Gastrocnemius medialis (tissue), 4 donors: ENCODE measurements at regions of chr3 and their contacts with region 1.

Region 1: DNA sequence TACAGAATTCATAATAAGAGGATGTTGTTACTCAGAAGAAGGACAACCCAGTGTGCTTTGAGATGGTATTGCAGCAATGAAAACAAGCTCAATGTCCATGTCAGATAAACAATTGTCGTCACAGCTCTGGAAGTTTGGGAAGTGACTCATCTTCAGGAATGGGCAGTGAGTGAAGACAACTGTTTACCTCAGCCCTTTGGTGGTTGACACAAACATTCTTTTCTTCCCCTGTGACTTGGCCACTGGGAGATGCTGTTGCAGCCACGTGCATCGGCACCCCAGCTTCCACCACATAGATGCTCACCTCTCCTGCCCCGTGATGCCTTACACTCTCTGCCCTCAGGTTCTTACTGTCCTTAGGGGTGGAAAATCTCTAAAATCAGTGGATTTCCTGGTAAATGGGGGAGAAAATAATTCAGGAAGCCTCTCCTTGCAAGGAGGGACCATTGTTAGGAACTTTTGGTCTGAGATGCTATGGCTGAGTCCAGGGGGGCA is 114.1 kb upstream of the GALNT15 start:
- DNase-seq: peak; percentile 89
- ATAC-seq: peak; percentile 85 to 89
- H3K4me3 ChIP-seq: peak overlapping the region in 2 of 4 donors; percentile 3 to 4
- H3K27ac ChIP-seq: peak overlapping the region; percentile 83 to 90 (median 86)
- H3K4me1 ChIP-seq: peaks cover 51 to 54% of the 10 kb centered on the region in 2 donors
- H3K27me3 ChIP-seq: no peaks in the 10 kb centered on the region
- CTCF ChIP-seq: peak in 1 of 5 experiments; percentile 8
- POLR2A ChIP-seq: peak in 1 of 2 donors; percentile 72

Region 2: DNA sequence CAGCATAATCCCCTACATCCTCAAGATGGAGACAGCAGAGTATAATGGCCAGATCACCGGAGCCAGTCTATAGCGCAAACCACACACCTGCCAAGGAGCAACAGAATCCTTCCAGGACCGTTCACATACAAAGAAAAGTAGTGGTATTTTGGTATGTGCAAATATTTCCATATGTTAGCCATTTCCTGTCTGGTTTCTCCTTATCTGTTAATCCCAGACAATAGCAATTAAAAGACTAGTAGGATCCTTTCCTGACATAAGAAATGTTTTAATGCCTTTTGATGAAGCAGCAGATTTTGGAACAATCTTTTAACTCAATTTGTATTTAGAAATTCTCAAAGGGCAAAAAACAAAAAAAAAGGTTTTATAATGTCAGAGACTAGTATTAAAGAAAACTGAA is 1017.5 kb before region 1 on chr3:
- in situ Hi-C with region 1: no loop called
- intact Hi-C with region 1: no loop called
- DNase-seq: no peak
- ATAC-seq: no peak
- H3K4me3 ChIP-seq: no peak overlapping the region
- H3K27ac ChIP-seq: peak overlapping the region in 1 of 4 donors; percentile 14
- H3K4me1 ChIP-seq: no peaks in the 10 kb centered on the region
- H3K27me3 ChIP-seq: no peaks in the 10 kb centered on the region
- CTCF ChIP-seq: no peak
- POLR2A ChIP-seq: no peak

Region 3: DNA sequence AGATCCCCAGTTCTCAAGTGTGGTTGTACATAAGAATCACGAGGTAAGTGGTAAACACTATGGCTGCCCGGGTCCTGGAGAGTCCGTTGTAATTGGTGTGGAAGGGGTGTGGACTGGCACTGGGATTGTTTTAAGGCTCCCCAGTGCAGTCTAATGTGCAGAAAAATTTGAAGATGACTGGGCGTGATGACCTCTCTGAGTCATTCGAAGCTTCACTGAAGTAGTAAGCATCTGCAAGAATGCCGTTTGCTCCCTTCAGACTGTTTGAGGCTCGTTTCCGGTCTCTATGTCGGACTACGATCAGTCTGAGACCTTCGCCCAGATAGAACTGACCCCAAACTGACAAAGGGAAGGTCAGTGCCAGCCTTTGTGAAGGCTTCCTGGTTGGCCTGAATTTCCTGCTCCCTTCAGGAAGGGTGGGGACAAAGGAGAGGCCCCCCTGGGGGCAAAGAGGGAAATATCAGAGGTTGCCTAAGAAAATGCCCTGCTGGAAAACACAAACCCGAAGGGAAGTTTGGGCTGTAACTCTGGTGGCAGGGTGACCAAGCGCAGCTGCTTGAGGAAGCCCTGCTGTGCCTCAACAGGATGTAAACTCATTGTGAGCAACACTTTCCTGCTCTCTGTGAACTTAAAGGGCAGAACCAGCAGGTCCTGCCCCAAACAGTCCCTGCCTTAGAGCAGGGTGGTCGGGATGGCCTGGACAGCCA is 424.2 kb before region 1 on chr3:
- in situ Hi-C with region 1: no loop called
- intact Hi-C with region 1: loop called (anchors 5 kb)
- DNase-seq: peak in 1 of 2 donors; percentile 29
- ATAC-seq: peak; percentile 16 to 21
- H3K4me3 ChIP-seq: peak overlapping the region in 3 of 4 donors; percentile 8 to 26 (median 11)
- H3K27ac ChIP-seq: peak overlapping the region; percentile 77 to 90 (median 84)
- H3K4me1 ChIP-seq: peaks cover 62 to 66% of the 10 kb centered on the region in 2 donors
- H3K27me3 ChIP-seq: no peaks in the 10 kb centered on the region
- CTCF ChIP-seq: no peak
- POLR2A ChIP-seq: no peak

Region 4: DNA sequence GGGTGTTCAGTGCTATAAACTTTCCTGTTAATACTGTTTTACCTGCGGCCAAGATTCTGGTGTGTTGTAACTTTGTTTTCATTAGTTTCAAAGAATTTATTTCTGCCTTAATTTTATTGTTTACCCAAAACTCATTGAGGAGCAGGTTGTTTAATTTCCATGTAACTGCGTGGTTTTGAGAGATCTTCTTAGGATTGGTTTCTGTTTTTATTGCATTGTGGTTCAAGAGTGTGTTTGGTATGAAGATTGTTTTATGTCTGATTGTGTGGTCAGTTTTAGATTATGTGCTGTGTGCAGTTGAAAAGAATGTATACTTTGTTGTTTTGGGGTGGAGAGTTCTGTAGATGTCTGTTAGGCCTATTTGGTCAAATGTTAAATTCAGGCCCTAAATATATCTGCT is 19.4 kb before region 1 on chr3:
- in situ Hi-C with region 1: no loop called
- intact Hi-C with region 1: no loop called
- DNase-seq: no peak
- ATAC-seq: no peak
- H3K4me3 ChIP-seq: no peak overlapping the region
- H3K27ac ChIP-seq: peak overlapping the region in 1 of 4 donors; percentile 35
- H3K4me1 ChIP-seq: no peaks in the 10 kb centered on the region
- H3K27me3 ChIP-seq: no peaks in the 10 kb centered on the region
- CTCF ChIP-seq: no peak
- POLR2A ChIP-seq: no peak

Region 5: GRCh38 chr3:16130066-16130465 is 69.7 kb after region 1 on chr3:
- in situ Hi-C with region 1: loop called in 1 of 4 experiments (anchors 10 kb)
- intact Hi-C with region 1: loop called (anchors 5 kb)
- DNase-seq: no peak
- ATAC-seq: peak; percentile 35 to 42
- H3K4me3 ChIP-seq: no peak overlapping the region
- H3K27ac ChIP-seq: peak overlapping the region; percentile 27 to 64 (median 46)
- H3K4me1 ChIP-seq: peaks cover 47 to 56% of the 10 kb centered on the region in 2 donors
- H3K27me3 ChIP-seq: no peaks in the 10 kb centered on the region
- CTCF ChIP-seq: no peak
- POLR2A ChIP-seq: no peak

Region 6: GRCh38 chr3:16177962-16178627 is 117.7 kb after region 1 on chr3:
- in situ Hi-C with region 1: loop called in 2 of 4 experiments (anchors 5 kb)
- intact Hi-C with region 1: loop called (anchors 1 kb)
- DNase-seq: peak; percentile 56 to 77
- ATAC-seq: peak; percentile 12 to 47
- H3K4me3 ChIP-seq: peak overlapping the region; percentile 51 to 66 (median 64)
- H3K27ac ChIP-seq: peak overlapping the region in 3 of 4 donors; percentile 77 to 84 (median 82)
- H3K4me1 ChIP-seq: peaks cover 10 to 33% of the 10 kb centered on the region in 2 donors
- H3K27me3 ChIP-seq: no peaks in the 10 kb centered on the region
- CTCF ChIP-seq: peak; percentile 94 to 99 (median 97)
- POLR2A ChIP-seq: no peak

Region 7: GRCh38 chr3:17742108-17742879 is 1681.9 kb after region 1 on chr3 and contains the start of gene TBC1D5:
- in situ Hi-C with region 1: no loop called
- intact Hi-C with region 1: loop called (anchors 5 kb)
- DNase-seq: peak; percentile 91 to 96
- ATAC-seq: peak; percentile 90 to 93
- H3K4me3 ChIP-seq: peak within 1 kb of the TSS; percentile 71 to 96 (median 83)
- H3K27ac ChIP-seq: peak within 1 kb of the TSS; percentile 92 to 99 (median 96)
- H3K4me1 ChIP-seq: peaks cover 19 to 21% of the 10 kb centered on the region in 2 donors
- H3K27me3 ChIP-seq: no peaks in the 10 kb centered on the region
- CTCF ChIP-seq: peak in 1 of 5 experiments; percentile 7
- POLR2A ChIP-seq: peak; percentile 81 to 88
- total RNA-seq, gene TBC1D5: 20.3 to 34.4 (median 27.1) TPM